Activated CD4-positive, alpha-beta memory T cell treated with anti-CD3 and anti-CD28 coated beads for 36 hours (primary cell): ENCODE measurements at regions of chr12 and their contacts with region 1.

Region 1: DNA sequence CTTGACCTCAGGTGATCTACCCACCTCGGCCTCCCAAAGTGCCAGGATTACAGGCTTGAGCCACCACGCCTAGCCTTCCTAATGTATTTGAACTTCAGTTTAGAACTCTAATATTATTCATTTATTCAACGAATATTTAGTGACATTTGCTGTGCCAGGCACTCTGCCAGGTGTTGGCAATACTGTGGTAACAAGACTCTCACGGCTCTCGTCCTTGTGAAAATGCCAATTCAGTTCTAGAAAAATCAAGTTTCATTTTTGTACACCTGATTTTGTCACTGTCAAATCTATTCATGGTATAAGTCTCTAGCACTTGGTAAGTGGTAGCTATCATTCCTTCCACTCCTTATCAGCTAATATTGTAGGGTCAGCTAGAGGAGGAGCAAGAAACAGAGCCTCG is 6.3 kb upstream of the PWP1 start:
- DNase-seq: no peak
- H3K4me3 Mint-ChIP-seq: no peak overlapping the region
- H3K27ac Mint-ChIP-seq: no peak overlapping the region
- H3K4me1 Mint-ChIP-seq: peaks cover 2% of the 10 kb centered on the region
- H3K27me3 Mint-ChIP-seq: peaks cover 4% of the 10 kb centered on the region

Region 2: DNA sequence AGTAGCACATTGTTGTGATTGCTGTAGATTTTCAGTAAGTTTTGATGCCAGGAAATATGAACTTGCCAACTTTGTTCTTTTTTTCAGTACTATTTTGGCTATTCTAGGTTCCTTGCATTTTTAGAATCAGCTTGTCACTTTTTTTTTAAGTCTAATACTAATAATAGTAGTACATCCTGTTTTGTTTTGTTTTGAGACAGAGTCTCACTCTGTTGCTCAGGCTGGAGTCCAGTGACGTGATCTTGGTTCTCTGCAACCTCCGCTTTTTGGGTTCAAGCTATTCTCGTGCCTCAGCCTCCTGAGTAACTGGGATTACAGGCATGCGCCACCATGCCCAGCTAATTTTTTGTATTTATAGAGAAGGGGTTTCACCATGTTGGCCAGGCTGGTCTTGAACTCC is 22.8 kb after region 1 on chr12:
- CTCF ChIA-PET with region 1: no interaction called
- POLR2A ChIA-PET with region 1: no interaction called
- intact Hi-C with region 1: no loop called
- DNase-seq: no peak
- H3K4me3 Mint-ChIP-seq: no peak overlapping the region
- H3K27ac Mint-ChIP-seq: no peak overlapping the region
- H3K4me1 Mint-ChIP-seq: no peaks in the 10 kb centered on the region
- H3K27me3 Mint-ChIP-seq: no peaks in the 10 kb centered on the region

Region 3: GRCh38 chr12:108193917-108194316 is 514.6 kb after region 1 on chr12:
- CTCF ChIA-PET with region 1: no interaction called
- POLR2A ChIA-PET with region 1: no interaction called
- intact Hi-C with region 1: loop called (anchors 5 kb)
- DNase-seq: peak; percentile 21
- H3K4me3 Mint-ChIP-seq: no peak overlapping the region
- H3K27ac Mint-ChIP-seq: no peak overlapping the region
- H3K4me1 Mint-ChIP-seq: no peaks in the 10 kb centered on the region
- H3K27me3 Mint-ChIP-seq: peaks cover 4% of the 10 kb centered on the region